Ascending aorta (tissue), 2 donors: ENCODE measurements at regions of chr3 and their contacts with region 1.

Region 1: DNA sequence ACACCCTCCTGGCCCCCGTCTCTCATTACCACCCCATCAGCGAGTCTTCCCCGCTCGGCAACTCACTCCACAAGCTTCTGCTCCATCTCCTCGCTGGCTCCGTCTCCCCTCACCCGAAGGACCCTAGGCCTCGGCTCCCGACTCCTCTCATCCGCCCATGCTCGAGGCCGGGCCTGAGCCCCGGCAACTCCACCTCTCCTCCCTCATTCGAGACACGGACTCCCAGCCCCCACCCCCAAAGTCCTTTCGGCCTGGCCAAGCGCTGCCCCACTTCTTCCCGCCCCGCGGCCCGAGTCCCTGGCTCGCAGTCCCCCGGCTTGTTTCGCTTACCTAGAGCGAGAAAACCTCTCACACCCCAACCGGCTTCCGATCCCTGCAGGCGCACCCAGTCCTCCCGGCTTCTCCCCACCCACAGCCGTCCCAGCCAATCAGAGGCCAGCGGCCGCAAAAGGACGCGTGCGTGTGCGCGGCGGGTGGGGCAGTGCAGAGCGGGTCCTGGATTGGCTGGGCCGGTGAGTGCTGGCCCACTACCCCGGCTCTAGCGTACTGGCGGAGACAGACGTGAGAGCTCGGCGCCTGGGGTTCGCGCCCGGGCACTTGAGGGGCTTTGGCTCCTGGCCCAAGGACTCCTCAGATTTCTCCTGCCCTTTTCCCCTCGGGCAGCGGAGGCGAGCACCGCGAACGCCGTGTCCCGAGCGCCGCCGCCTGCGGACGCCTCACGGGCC is at the start of gene HIGD1A:
- DNase-seq: peak; percentile 87 to 97
- H3K4me3 ChIP-seq: peak within 1 kb of the TSS; percentile 74 to 85
- H3K27ac ChIP-seq: peak within 1 kb of the TSS; percentile 96 to 97
- H3K4me1 ChIP-seq: peaks cover 0 to 34% of the 10 kb centered on the region in 2 donors
- H3K27me3 ChIP-seq: no peaks in the 10 kb centered on the region
- CTCF ChIP-seq: no peak
- total RNA-seq, gene HIGD1A: 109 TPM

Region 2: GRCh38 chr3:42772670-42773408 is 31.4 kb before region 1 on chr3 and contains the start of gene CCDC13:
- intact Hi-C with region 1: loop called (anchors 2 kb)
- DNase-seq: peak; percentile 82 to 98
- H3K4me3 ChIP-seq: peak within 1 kb of the TSS; percentile 53 to 64
- H3K27ac ChIP-seq: peak within 1 kb of the TSS; percentile 60 to 68
- H3K4me1 ChIP-seq: peaks cover 0 to 5% of the 10 kb centered on the region in 2 donors
- H3K27me3 ChIP-seq: no peaks in the 10 kb centered on the region
- CTCF ChIP-seq: no peak
- total RNA-seq, gene CCDC13: 2.1 TPM

Region 3: DNA sequence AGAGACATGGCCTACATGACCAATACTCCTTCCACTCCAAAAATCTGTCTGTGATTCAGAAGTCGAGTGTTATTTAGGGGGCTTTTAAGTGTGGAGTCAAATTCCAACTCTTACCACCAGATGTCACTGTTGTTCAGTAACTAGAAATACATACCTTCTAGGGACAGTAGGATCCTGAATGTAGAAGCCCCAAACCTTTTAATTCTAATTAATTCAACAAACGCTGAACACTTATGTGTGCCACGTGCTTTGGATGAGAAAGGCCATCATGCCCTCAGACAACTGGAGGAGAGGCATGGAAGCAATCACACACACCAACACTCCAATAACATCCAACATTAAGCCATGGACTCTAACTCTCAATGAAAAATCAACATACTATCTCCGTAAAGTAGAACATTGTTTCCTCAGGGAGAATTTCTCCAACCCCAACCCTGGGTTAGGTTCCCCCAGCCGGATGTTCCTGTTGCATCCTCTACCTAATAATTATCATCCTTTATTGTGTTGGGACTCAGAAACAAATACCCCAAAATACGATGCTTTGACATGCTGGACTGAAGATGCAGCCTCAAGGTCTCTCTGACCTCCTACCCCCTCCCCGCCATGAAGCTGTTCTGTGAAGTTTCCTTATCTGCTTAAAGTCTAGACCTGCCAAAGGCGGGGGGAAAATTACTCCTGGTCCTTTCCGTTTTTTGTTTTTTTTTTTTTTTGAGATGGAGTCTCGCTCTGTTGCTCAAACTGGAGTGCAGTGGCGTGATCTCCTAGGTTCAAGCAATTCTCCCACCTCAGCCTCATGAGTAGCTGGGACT is 23.2 kb before region 1 on chr3:
- intact Hi-C with region 1: loop called (anchors 2 kb)
- DNase-seq: no peak
- H3K4me3 ChIP-seq: no peak overlapping the region
- H3K27ac ChIP-seq: peak overlapping the region in 1 of 2 donors; percentile 72
- H3K4me1 ChIP-seq: peaks cover 3 to 13% of the 10 kb centered on the region in 2 donors
- H3K27me3 ChIP-seq: no peaks in the 10 kb centered on the region
- CTCF ChIP-seq: peak; percentile 61 to 80 (median 80)